ENCODE measurements at regions of chr16 and their contacts with region 1.

Region 1: GRCh38 chr16:68229431-68230198 is 6.3 kb downstream of the ESRP2 start:
- DNase-seq: peak; percentile 64
- ATAC-seq: no peak
- H3K4me3 ChIP-seq: no peak overlapping the region
- H3K27ac ChIP-seq: no peak overlapping the region
- H3K4me1 ChIP-seq: peaks cover 13% of the 10 kb centered on the region
- H3K27me3 ChIP-seq: no peaks in the 10 kb centered on the region
- CTCF ChIP-seq: peak; percentile 81

Region 2: DNA sequence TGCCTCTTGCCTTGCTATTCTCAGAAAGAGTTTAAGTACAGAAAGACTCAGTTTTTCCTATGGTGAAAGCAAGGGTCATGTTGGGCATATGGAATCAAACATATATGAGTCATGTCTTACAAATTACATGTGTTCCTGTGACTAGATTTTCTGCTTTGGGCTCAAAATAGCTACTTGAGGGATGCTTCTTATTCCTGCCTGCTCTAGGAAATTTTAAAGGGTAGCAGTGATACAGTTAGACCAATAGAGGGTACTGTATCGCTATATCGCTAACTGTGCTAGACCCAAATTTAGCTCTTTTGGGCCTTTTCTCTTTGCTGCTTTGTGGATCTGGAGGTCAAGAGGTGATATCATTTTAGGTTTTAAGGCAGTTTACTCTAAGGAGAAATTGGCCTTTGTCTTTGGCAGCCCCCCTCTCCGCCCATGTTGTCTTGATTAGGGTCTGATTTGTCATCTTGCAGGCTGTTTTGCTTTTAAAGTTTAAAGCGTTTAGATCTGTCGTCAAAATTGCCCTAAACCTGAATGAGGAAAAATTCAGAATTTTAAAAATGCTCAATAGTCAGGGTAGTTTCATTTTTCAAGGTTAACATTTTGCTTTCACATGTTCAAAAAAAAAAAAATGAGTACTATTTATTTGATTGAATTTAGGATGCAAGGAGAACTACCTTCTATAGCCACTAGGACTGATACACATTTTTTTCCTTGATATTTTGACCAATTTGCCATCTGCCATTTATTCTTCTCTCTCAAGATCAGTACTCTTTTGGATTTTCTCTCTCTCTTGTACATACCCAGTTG is 135.6 kb before region 1 on chr16:
- CTCF ChIA-PET with region 1: interaction called, 4 read pairs
- POLR2A ChIA-PET with region 1: no interaction called
- intact Hi-C with region 1: loop called (anchors 2 kb)
- DNase-seq: peak; percentile 32
- ATAC-seq: peak; percentile 53; the same call in 1 of the 2 replicates
- H3K4me3 ChIP-seq: no peak overlapping the region
- H3K27ac ChIP-seq: no peak overlapping the region
- H3K4me1 ChIP-seq: no peaks in the 10 kb centered on the region
- H3K27me3 ChIP-seq: no peaks in the 10 kb centered on the region
- CTCF ChIP-seq: peak; percentile 48

Region 3: DNA sequence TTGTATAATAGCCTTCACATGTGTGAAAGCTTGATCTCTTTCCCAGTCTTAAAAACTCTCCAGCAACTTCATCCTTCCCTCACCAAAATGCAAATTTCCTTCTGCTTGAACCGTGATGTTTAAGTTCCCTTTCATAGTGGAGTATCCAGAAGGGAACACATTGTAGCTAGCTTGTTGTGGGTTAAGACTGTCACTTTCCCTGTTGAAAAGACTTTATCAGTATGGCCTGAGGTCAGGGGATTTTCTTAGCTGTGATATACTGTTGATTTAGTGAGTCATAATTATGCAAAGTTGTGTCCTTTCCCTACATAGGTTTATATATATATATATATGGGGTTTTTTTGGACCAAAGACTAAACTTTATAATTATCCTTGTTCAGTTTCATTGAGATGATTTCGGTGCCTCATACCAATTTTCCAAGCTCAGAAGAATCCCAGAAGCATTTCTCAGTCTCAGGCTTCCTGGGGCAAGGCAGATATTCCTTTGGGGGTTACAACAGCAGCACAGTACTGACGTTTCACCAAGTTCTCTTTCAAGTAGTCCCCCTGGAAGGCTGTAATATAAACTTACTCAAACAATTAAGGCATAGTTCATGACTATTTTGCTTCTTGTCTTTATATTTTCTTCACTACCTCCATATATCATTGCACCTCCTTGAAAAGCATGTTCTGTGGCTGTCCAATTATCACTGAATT is 29.4 kb before region 1 on chr16:
- CTCF ChIA-PET with region 1: no interaction called
- POLR2A ChIA-PET with region 1: no interaction called
- intact Hi-C with region 1: loop called (anchors 2 kb)
- DNase-seq: peak; percentile 54
- ATAC-seq: peak; percentile 96
- H3K4me3 ChIP-seq: no peak overlapping the region
- H3K27ac ChIP-seq: no peak overlapping the region
- H3K4me1 ChIP-seq: peaks cover 13% of the 10 kb centered on the region
- H3K27me3 ChIP-seq: no peaks in the 10 kb centered on the region
- CTCF ChIP-seq: no peak

Measured in PC-3 (cell line).